IMR-90 (cell line): ENCODE measurements at regions of chr5 and their contacts with region 1.

Region 1: GRCh38 chr5:175444060-175444904 is at the start of gene DRD1:
- DNase-seq: peak; percentile 21
- ATAC-seq: peak; percentile 92
- H3K4me3 ChIP-seq: peak within 1 kb of the TSS; percentile 8; the same call in 1 of the 2 replicates
- H3K27ac ChIP-seq: no peak within 1 kb of the TSS
- H3K4me1 ChIP-seq: no peaks in the 10 kb centered on the region; the same call in 1 of the 2 replicates
- H3K27me3 ChIP-seq: peaks cover 13% of the 10 kb centered on the region
- CTCF ChIP-seq: peak; percentile 78
- POLR2A ChIP-seq: no peak
- RAD21 ChIP-seq: peak; percentile 83
- total RNA-seq, gene DRD1: 0.18 and 0.28 TPM in 2 replicates

Region 2: GRCh38 chr5:174951146-174951780 is 493.0 kb before region 1 on chr5:
- CTCF ChIA-PET with region 1: interaction called, 5 read pairs
- POLR2A ChIA-PET with region 1: no interaction called
- dilution Hi-C with region 1: no loop called
- in situ Hi-C with region 1: loop called (anchors 5 kb)
- intact Hi-C with region 1: loop called (anchors 1 kb)
- DNase-seq: peak; percentile 80
- ATAC-seq: peak; percentile 99
- H3K4me3 ChIP-seq: no peak overlapping the region
- H3K27ac ChIP-seq: no peak overlapping the region
- H3K4me1 ChIP-seq: no peaks in the 10 kb centered on the region
- H3K27me3 ChIP-seq: no peaks in the 10 kb centered on the region; the same call in 1 of the 2 replicates
- CTCF ChIP-seq: peak; percentile 95
- POLR2A ChIP-seq: no peak
- RAD21 ChIP-seq: peak; percentile 97

Region 3: DNA sequence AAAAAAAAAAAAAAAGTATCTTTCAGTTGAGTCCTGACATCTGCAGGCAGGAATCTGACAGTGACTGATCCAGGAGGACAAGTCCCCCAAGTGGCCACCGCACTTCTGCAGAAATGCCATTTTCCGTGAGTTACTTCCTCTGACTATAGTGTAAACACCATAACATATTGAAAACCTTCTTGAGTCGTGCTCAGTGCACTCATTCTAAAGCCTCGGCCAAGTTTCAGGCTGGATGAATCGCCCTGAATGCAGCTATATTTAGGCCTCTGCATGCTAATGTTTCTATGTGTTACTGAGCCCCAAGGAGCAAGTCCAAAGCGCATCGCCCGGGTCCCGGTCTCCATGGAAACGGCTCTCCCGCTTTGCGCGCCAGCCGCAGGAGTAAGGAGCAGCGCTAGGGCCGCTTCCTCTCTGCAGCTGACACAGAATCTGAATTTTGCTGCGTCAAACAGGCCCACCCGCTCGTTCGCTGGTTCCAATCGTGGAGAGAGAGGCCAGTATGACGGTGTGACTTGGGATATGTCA is 384.5 kb before region 1 on chr5:
- CTCF ChIA-PET with region 1: no interaction called
- POLR2A ChIA-PET with region 1: no interaction called
- dilution Hi-C with region 1: no loop called
- in situ Hi-C with region 1: no loop called
- intact Hi-C with region 1: loop called (anchors 2 kb)
- DNase-seq: peak; percentile 62
- ATAC-seq: peak; percentile 85
- H3K4me3 ChIP-seq: no peak overlapping the region
- H3K27ac ChIP-seq: no peak overlapping the region
- H3K4me1 ChIP-seq: no peaks in the 10 kb centered on the region
- H3K27me3 ChIP-seq: no peaks in the 10 kb centered on the region
- CTCF ChIP-seq: 0 out of 2 replicates have a peak, but pooled peaks have one; percentile 10
- POLR2A ChIP-seq: no peak
- RAD21 ChIP-seq: no peak

Region 4: GRCh38 chr5:175133185-175133584 is 311.1 kb before region 1 on chr5:
- CTCF ChIA-PET with region 1: no interaction called
- POLR2A ChIA-PET with region 1: no interaction called
- dilution Hi-C with region 1: no loop called
- in situ Hi-C with region 1: no loop called
- intact Hi-C with region 1: loop called (anchors 1 kb)
- DNase-seq: no peak
- ATAC-seq: no peak
- H3K4me3 ChIP-seq: no peak overlapping the region
- H3K27ac ChIP-seq: no peak overlapping the region
- H3K4me1 ChIP-seq: no peaks in the 10 kb centered on the region
- H3K27me3 ChIP-seq: 0 out of 2 replicates have a peak, but pooled peaks cover 1% of the 10 kb centered on the region
- CTCF ChIP-seq: no peak; the same call in 1 of the 2 replicates
- POLR2A ChIP-seq: no peak
- RAD21 ChIP-seq: no peak

Region 5: DNA sequence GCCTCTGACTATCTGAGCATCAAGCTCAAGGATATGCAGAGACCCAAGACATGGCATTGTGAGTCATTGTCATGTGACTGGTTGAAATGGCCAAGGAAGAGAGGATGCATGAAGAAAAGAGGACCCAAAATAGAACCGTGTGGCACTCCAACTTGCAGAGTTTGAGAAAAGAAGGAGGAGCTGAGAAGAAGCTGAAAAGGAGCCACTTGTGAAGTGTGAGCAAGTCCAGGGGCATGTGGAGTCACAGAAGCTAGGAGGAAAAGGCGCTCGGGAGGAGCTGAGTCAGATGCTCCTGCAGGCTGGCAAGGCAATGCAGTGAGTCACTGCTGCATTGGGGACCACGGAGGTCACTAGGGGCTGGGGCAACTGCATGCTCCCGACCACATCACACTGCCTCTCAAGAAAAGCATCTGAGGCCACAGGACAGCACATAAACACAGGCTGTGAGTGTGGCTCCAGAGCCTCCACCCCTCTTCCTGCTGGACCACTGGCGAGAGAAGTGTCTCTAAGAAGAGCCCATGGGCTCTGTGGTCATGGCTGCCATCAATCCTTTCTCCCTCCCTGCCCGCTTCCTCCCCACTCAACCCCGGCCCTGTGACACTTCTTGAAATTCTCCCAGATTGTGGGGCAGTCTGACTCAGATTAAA is 197.9 kb before region 1 on chr5:
- CTCF ChIA-PET with region 1: interaction called, 4 read pairs
- POLR2A ChIA-PET with region 1: no interaction called
- dilution Hi-C with region 1: no loop called
- in situ Hi-C with region 1: no loop called
- intact Hi-C with region 1: loop called (anchors 5 kb)
- DNase-seq: peak; percentile 98
- ATAC-seq: peak; percentile 94
- H3K4me3 ChIP-seq: no peak overlapping the region
- H3K27ac ChIP-seq: peak overlapping the region; percentile 66
- H3K4me1 ChIP-seq: peaks cover 4% of the 10 kb centered on the region
- H3K27me3 ChIP-seq: no peaks in the 10 kb centered on the region
- CTCF ChIP-seq: no peak
- POLR2A ChIP-seq: no peak
- RAD21 ChIP-seq: no peak

Region 6: GRCh38 chr5:175344331-175345195 is 99.7 kb before region 1 on chr5:
- CTCF ChIA-PET with region 1: no interaction called
- POLR2A ChIA-PET with region 1: no interaction called
- dilution Hi-C with region 1: no loop called
- in situ Hi-C with region 1: no loop called
- intact Hi-C with region 1: loop called (anchors 2 kb)
- DNase-seq: peak; percentile 50
- ATAC-seq: peak; percentile 64
- H3K4me3 ChIP-seq: no peak overlapping the region
- H3K27ac ChIP-seq: no peak overlapping the region
- H3K4me1 ChIP-seq: peaks cover 17% of the 10 kb centered on the region
- H3K27me3 ChIP-seq: no peaks in the 10 kb centered on the region
- CTCF ChIP-seq: 0 out of 2 replicates have a peak, but pooled peaks have one; percentile 5
- POLR2A ChIP-seq: no peak
- RAD21 ChIP-seq: no peak; the same call in 1 of the 2 replicates

Region 7: GRCh38 chr5:175464074-175464941 is 20.0 kb after region 1 on chr5:
- CTCF ChIA-PET with region 1: interaction called, 10 read pairs
- POLR2A ChIA-PET with region 1: no interaction called
- dilution Hi-C with region 1: no loop called
- in situ Hi-C with region 1: no loop called
- intact Hi-C with region 1: no loop called
- DNase-seq: peak; percentile 36
- ATAC-seq: peak; percentile 88
- H3K4me3 ChIP-seq: no peak overlapping the region
- H3K27ac ChIP-seq: no peak overlapping the region
- H3K4me1 ChIP-seq: peaks cover 2% of the 10 kb centered on the region; the same call in 1 of the 2 replicates
- H3K27me3 ChIP-seq: peaks cover 8% of the 10 kb centered on the region; the same call in 1 of the 2 replicates
- CTCF ChIP-seq: peak; percentile 55
- POLR2A ChIP-seq: no peak
- RAD21 ChIP-seq: peak; percentile 51

Region 8: GRCh38 chr5:175700991-175701390 is 256.7 kb after region 1 on chr5:
- CTCF ChIA-PET with region 1: no interaction called
- POLR2A ChIA-PET with region 1: no interaction called
- dilution Hi-C with region 1: no loop called
- in situ Hi-C with region 1: no loop called
- intact Hi-C with region 1: no loop called
- DNase-seq: no peak
- ATAC-seq: no peak
- H3K4me3 ChIP-seq: no peak overlapping the region
- H3K27ac ChIP-seq: no peak overlapping the region
- H3K4me1 ChIP-seq: no peaks in the 10 kb centered on the region
- H3K27me3 ChIP-seq: no peaks in the 10 kb centered on the region
- CTCF ChIP-seq: no peak
- POLR2A ChIP-seq: no peak
- RAD21 ChIP-seq: no peak